T-cell (primary cell): ENCODE measurements at regions of chr13 and their contacts with region 1.

Region 1: DNA sequence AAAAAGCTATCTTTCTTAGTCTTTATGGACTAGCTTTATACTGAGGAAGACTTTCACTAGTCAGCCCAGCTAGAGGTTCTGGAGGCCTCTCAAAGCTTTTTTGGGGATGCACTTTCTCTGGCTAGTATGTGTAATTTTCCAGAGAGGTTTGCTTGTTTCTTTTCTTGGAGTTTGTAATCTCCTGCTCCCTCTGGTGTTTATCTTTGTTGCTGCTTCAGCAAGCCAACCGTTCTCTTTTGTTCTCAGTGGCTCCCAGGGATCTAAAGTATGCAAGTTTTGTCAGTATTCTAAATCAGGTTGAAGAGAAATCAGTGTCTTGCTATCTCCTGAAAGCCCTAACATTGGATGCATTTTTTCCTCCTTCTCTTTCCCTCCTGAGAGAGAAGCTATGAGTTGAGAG is 121.1 kb upstream of the MYO16 start:
- DNase-seq: peak in 1 of 35 experiments; percentile 42
- ATAC-seq: peak in 1 of 4 experiments; percentile 32
- H3K4me3 ChIP-seq: no peak overlapping the region
- H3K4me3 Mint-ChIP-seq: no peak overlapping the region
- H3K27ac ChIP-seq: no peak overlapping the region
- H3K27ac Mint-ChIP-seq: no peak overlapping the region
- H3K4me1 ChIP-seq: no peaks in the 10 kb centered on the region
- H3K4me1 Mint-ChIP-seq: peaks cover 0 to 5% (median 0%) of the 10 kb centered on the region in 3 donors
- H3K27me3 ChIP-seq: no peaks in the 10 kb centered on the region
- H3K27me3 Mint-ChIP-seq: no peaks in the 10 kb centered on the region

Region 2: GRCh38 chr13:107192289-107192688 is 1316.0 kb before region 1 on chr13:
- CTCF ChIA-PET with region 1: no interaction called
- POLR2A ChIA-PET with region 1: no interaction called
- DNase-seq: no peak
- ATAC-seq: no peak
- H3K4me3 ChIP-seq: no peak overlapping the region
- H3K4me3 Mint-ChIP-seq: no peak overlapping the region
- H3K27ac ChIP-seq: no peak overlapping the region
- H3K27ac Mint-ChIP-seq: no peak overlapping the region
- H3K4me1 ChIP-seq: no peaks in the 10 kb centered on the region
- H3K4me1 Mint-ChIP-seq: no peaks in the 10 kb centered on the region
- H3K27me3 ChIP-seq: no peaks in the 10 kb centered on the region
- H3K27me3 Mint-ChIP-seq: no peaks in the 10 kb centered on the region

Region 3: GRCh38 chr13:107993239-107993872 is 514.9 kb before region 1 on chr13:
- CTCF ChIA-PET with region 1: no interaction called
- POLR2A ChIA-PET with region 1: no interaction called
- DNase-seq: no peak
- ATAC-seq: no peak
- H3K4me3 ChIP-seq: no peak overlapping the region
- H3K4me3 Mint-ChIP-seq: no peak overlapping the region
- H3K27ac ChIP-seq: no peak overlapping the region
- H3K27ac Mint-ChIP-seq: no peak overlapping the region
- H3K4me1 ChIP-seq: no peaks in the 10 kb centered on the region
- H3K4me1 Mint-ChIP-seq: no peaks in the 10 kb centered on the region
- H3K27me3 ChIP-seq: no peaks in the 10 kb centered on the region
- H3K27me3 Mint-ChIP-seq: no peaks in the 10 kb centered on the region

Region 4: GRCh38 chr13:108322206-108322824 is 185.9 kb before region 1 on chr13:
- CTCF ChIA-PET with region 1: interaction called, 4 to 27 read pairs
- POLR2A ChIA-PET with region 1: no interaction called
- DNase-seq: peak in 1 of 35 experiments; percentile 63
- ATAC-seq: peak; percentile 71 to 85 (median 80)
- H3K4me3 ChIP-seq: no peak overlapping the region
- H3K4me3 Mint-ChIP-seq: no peak overlapping the region
- H3K27ac ChIP-seq: no peak overlapping the region
- H3K27ac Mint-ChIP-seq: no peak overlapping the region
- H3K4me1 ChIP-seq: peaks cover 0 to 7% of the 10 kb centered on the region in 2 experiments
- H3K4me1 Mint-ChIP-seq: peaks cover 17 to 26% (median 23%) of the 10 kb centered on the region in 3 donors
- H3K27me3 ChIP-seq: no peaks in the 10 kb centered on the region
- H3K27me3 Mint-ChIP-seq: no peaks in the 10 kb centered on the region

Region 5: DNA sequence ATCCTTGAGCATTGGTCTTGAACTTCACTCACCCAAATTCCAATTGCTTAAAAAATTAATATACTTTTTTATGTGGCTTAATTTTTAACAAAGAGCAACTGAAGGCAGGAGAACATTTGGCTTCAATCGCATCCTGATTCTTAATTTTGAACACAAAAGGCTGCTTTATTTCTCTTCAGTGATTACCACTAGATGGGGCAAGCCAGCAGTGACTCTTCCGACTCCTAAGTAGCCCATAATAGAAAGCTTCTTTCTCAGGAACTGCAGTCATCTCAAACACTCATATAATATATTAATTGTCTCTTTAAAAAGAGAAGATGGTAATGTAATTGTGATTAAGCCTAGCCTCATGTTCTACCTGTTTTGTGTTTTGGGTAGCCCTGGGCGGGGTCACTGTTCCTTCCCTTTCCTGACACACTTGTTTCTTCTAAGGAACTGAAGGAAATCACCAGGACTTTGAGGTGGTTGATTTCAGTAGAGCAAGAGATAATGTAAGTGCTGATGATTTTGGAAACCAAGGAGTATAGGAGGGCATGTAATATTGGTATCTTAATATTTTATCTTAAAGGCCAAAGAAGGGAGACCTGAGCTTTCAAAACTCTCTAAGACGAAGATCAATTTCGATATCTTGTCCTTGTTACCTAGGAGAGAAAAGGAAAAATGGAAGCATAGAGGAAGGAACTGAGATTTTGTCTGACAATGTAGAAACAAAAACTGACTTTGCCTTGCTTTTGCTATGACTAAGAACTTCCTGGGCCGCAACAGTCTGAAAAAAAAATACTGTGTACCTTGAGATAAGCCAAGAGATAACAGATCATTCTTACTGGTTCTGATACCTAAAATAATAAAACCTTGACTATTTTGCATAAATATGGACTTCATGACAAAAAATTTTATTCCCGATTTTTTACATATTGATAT is 165.6 kb before region 1 on chr13:
- CTCF ChIA-PET with region 1: interaction called, 10 to 13 read pairs
- POLR2A ChIA-PET with region 1: no interaction called
- DNase-seq: peak in 5 of 35 experiments; percentile 5 to 44 (median 8)
- ATAC-seq: peak; percentile 52 to 79 (median 66)
- H3K4me3 ChIP-seq: peak overlapping the region in 1 of 2 donors; percentile 13
- H3K4me3 Mint-ChIP-seq: peak overlapping the region; percentile 18 to 65 (median 64)
- H3K27ac ChIP-seq: peak overlapping the region; percentile 65
- H3K27ac Mint-ChIP-seq: peak overlapping the region; percentile 87 to 91
- H3K4me1 ChIP-seq: peaks cover 0 to 10% of the 10 kb centered on the region in 2 experiments
- H3K4me1 Mint-ChIP-seq: peaks cover 35 to 38% (median 36%) of the 10 kb centered on the region in 3 donors
- H3K27me3 ChIP-seq: no peaks in the 10 kb centered on the region
- H3K27me3 Mint-ChIP-seq: peaks cover 0 to 2% of the 10 kb centered on the region in 2 donors